PC-9 (cell line): ENCODE measurements at regions of chr14 and their contacts with region 1.

Region 1: GRCh38 chr14:77097700-77098528 is at the start of gene CIPC:
- DNase-seq: peak; percentile 99 to 100
- H3K4me3 ChIP-seq: peak within 1 kb of the TSS; percentile 83
- H3K27ac ChIP-seq: peak within 1 kb of the TSS; percentile 90
- H3K4me1 ChIP-seq: peaks cover 25% of the 10 kb centered on the region
- H3K27me3 ChIP-seq: no peaks in the 10 kb centered on the region
- CTCF ChIP-seq: no peak; the same call in 1 of the 2 replicates
- total RNA-seq, gene CIPC: 54.7 and 66.3 TPM in 2 replicates

Region 2: DNA sequence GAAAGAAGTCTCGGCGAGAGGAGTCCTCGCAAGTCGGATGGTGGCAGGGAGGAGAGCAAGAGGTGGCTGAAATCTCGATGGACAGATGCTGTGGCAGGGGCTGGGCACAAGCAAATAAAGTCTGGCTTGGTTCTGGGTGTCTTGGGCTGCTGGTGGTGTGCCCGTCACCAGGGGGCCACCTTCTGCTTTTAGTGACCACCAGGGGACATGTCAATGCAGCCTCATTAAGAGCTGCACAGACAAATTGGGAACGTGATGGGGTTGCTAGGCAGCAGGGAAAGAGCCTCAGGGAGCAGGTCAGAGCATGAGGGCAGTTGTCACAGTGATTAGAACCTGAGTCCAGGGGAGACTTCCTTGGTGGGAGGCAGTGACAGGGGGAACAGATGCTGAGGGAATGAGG is 227.7 kb before region 1 on chr14:
- CTCF ChIA-PET with region 1: interaction called, 26 read pairs
- POLR2A ChIA-PET with region 1: interaction called, 11 read pairs
- intact Hi-C with region 1: loop called (anchors 1 kb)
- DNase-seq: peak in 1 of 2 experiments; percentile 43
- H3K4me3 ChIP-seq: no peak overlapping the region
- H3K27ac ChIP-seq: no peak overlapping the region
- H3K4me1 ChIP-seq: no peaks in the 10 kb centered on the region
- H3K27me3 ChIP-seq: peaks cover 41% of the 10 kb centered on the region
- CTCF ChIP-seq: peak; percentile 51; the same call in 1 of the 2 replicates

Region 3: GRCh38 chr14:77028384-77029231 is 69.3 kb before region 1 on chr14 and contains the start of gene IRF2BPL:
- CTCF ChIA-PET with region 1: interaction called, 7 read pairs
- POLR2A ChIA-PET with region 1: interaction called, 6 read pairs
- intact Hi-C with region 1: loop called (anchors 1 kb)
- DNase-seq: peak; percentile 97 to 100
- H3K4me3 ChIP-seq: peak within 1 kb of the TSS; percentile 64
- H3K27ac ChIP-seq: peak within 1 kb of the TSS; percentile 88
- H3K4me1 ChIP-seq: peaks cover 54% of the 10 kb centered on the region
- H3K27me3 ChIP-seq: no peaks in the 10 kb centered on the region
- CTCF ChIP-seq: no peak
- total RNA-seq, gene IRF2BPL: 74.6 and 84.5 TPM in 2 replicates

Region 4: GRCh38 chr14:77076113-77076631 is 21.7 kb before region 1 on chr14:
- CTCF ChIA-PET with region 1: interaction called, 10 read pairs
- POLR2A ChIA-PET with region 1: interaction called, 5 read pairs
- intact Hi-C with region 1: no loop called
- DNase-seq: no peak
- H3K4me3 ChIP-seq: no peak overlapping the region
- H3K27ac ChIP-seq: no peak overlapping the region
- H3K4me1 ChIP-seq: peaks cover 35% of the 10 kb centered on the region
- H3K27me3 ChIP-seq: no peaks in the 10 kb centered on the region
- CTCF ChIP-seq: no peak

Region 5: DNA sequence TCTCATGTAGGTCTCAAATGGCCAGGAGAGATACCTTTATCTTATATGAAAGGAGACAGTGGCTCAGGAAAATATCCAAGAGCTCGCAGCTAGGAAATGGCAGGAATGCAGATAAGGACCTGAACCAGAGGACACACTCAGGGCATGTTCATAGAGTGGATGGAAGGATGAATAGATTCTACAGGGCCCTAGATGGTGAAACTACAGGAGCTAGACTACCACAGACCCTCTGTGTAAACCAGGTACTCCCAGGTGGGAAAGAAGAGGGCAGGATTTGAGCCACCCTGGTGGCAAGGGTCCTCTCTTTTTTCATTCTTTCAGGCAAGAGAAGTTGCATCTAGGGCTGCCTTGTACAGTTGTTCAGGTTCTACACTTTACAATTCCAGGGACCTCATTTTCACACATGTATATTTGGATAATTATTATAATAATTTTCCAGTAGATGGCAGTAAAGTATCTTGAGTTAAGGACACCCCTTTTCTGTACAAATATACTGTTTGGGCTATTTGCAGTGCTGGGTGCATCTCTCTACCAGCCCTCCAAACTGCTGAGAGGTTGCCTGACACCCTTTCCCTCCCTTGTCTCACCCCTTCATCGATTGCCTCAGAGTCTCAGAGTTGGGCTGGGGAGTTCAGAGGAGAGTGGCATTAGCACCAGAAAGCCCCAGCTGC is 54.1 kb after region 1 on chr14:
- CTCF ChIA-PET with region 1: interaction called, 8 read pairs
- POLR2A ChIA-PET with region 1: no interaction called
- intact Hi-C with region 1: loop called (anchors 1 kb)
- DNase-seq: peak; percentile 31 to 66
- H3K4me3 ChIP-seq: no peak overlapping the region
- H3K27ac ChIP-seq: no peak overlapping the region
- H3K4me1 ChIP-seq: no peaks in the 10 kb centered on the region
- H3K27me3 ChIP-seq: peaks cover 52% of the 10 kb centered on the region
- CTCF ChIP-seq: peak; percentile 70

Region 6: DNA sequence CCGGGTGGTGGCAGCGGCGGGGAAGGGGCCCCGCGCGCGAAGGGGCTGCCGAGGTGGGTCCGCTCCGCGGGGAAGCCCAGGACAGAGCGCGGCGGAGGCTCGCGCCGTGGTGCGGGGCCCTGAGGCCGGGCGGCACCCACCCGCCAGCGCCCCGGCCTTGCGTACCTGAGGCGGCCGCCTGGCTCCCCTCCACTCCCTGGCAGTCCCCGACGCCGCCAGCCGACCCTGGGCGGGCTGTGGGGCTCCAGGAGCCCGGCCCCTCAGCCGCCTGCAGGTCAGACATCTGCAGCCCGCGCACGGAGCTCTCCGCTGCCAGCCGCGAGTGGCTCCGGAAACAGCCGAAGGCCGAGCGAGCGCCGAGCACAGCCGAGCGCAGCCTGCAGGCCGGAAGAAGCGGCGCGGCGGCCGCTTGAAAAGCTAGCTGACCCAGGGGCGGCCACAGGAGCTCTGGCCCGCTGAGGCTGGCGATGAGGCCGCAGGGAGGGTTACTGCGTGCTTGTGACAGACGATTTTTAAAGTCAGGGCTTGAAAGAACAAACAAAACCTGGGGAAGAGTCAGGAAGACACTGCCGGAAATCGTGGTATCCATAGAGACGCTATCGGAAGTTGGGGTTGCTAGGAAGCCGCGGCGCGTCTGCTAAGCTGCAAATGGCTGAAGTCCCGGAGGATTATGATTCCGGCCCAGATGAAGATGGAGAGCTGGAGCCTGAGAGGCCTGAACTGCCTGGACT is 279.0 kb after region 1 on chr14 and contains the starts of genes SAMD15 and TMED8:
- CTCF ChIA-PET with region 1: no interaction called
- POLR2A ChIA-PET with region 1: interaction called, 17 read pairs
- intact Hi-C with region 1: no loop called
- DNase-seq: peak; percentile 83 to 97
- H3K4me3 ChIP-seq: peak within 1 kb of the TSS; percentile 82
- H3K27ac ChIP-seq: peak within 1 kb of the TSS; percentile 40
- H3K4me1 ChIP-seq: peaks cover 19% of the 10 kb centered on the region
- H3K27me3 ChIP-seq: no peaks in the 10 kb centered on the region
- CTCF ChIP-seq: peak; percentile 46; the same call in 1 of the 2 replicates
- total RNA-seq, gene SAMD15: 4.8 and 7.8 TPM in 2 replicates
- total RNA-seq, gene TMED8: 32.1 and 42.6 TPM in 2 replicates

Region 7: DNA sequence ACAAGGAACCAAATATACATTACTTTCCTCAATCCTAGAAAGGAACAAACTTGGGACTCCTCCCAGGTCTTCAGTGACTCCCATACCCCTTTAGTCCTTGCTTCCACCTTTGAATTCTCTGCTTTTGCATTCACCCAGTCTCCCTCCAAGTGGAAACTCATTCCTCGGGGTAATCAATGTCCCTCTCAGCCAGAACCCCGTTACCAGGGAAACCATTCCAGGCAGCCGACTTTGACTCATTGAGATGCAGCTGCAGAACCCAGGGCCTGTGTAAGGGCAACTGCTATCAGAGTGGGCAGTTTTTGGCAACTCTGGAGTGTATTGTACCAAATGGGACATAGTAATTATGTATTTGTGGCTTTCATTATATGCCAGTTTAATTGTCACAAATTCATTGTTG is 1258.5 kb after region 1 on chr14:
- CTCF ChIA-PET with region 1: no interaction called
- POLR2A ChIA-PET with region 1: no interaction called
- intact Hi-C with region 1: no loop called
- DNase-seq: no peak
- H3K4me3 ChIP-seq: no peak overlapping the region
- H3K27ac ChIP-seq: no peak overlapping the region
- H3K4me1 ChIP-seq: no peaks in the 10 kb centered on the region
- H3K27me3 ChIP-seq: peaks cover 42% of the 10 kb centered on the region; the same call in 1 of the 2 replicates
- CTCF ChIP-seq: no peak